ENCODE measurements at regions of chr12 and their contacts with region 1.

Region 1: DNA sequence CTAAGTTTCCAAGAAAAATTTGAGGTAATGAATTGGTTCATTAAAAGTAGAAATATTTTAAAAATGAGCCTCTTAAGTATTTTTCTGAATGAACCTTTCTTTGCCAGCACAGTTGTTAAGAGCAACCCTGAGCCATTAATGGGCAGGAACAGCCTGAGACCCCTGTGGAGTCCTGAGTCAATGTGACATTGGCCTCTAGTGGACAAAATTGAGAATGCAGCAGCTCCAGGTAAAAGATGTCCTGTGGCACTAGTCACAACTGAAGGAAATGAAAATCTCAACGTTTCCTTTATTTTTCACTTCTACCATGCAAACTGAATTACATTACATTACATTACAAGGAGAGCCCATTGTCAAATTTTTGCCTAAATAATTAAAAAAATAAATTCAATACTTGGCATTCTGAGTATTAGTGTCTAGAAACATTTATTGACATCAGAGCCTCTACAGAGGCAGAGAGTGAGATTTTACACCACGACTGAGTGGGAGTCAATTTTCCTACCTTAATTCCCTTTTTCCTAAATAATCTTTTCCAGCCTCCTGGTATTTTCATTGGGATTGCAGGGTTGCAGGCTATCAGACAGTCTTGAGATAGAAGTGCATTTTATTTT is 135.7 kb downstream of the PPM1H start:
- DNase-seq: peak; percentile 47 to 62
- H3K4me3 ChIP-seq: no peak overlapping the region
- H3K27ac ChIP-seq: no peak overlapping the region
- H3K4me1 ChIP-seq: no peaks in the 10 kb centered on the region
- H3K27me3 ChIP-seq: no peaks in the 10 kb centered on the region
- CTCF ChIP-seq: peak; percentile 84 to 89 (median 88)
- POLR2A ChIP-seq: no peak

Region 2: DNA sequence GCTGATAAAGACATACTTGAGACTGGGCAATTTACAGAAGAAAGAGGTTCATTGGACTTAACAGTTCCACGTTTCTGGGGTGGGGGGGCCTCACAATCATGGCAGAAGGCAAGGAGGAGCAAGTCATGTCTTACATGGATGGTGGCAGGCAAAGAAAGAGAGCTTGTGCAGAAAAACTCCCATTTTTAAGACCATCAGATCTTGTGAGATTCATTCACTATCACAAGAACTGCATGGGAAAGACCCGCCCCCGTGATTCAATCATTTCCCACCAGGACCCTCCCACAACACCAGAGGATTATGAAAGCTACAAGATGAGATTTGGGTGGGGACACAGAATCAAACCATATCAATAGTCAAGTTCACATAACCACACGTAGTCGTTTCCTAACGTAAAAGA is 453.6 kb before region 1 on chr12:
- intact Hi-C with region 1: no loop called
- DNase-seq: no peak
- H3K4me3 ChIP-seq: no peak overlapping the region
- H3K27ac ChIP-seq: no peak overlapping the region
- H3K4me1 ChIP-seq: no peaks in the 10 kb centered on the region
- H3K27me3 ChIP-seq: no peaks in the 10 kb centered on the region
- CTCF ChIP-seq: no peak
- POLR2A ChIP-seq: no peak

Region 3: DNA sequence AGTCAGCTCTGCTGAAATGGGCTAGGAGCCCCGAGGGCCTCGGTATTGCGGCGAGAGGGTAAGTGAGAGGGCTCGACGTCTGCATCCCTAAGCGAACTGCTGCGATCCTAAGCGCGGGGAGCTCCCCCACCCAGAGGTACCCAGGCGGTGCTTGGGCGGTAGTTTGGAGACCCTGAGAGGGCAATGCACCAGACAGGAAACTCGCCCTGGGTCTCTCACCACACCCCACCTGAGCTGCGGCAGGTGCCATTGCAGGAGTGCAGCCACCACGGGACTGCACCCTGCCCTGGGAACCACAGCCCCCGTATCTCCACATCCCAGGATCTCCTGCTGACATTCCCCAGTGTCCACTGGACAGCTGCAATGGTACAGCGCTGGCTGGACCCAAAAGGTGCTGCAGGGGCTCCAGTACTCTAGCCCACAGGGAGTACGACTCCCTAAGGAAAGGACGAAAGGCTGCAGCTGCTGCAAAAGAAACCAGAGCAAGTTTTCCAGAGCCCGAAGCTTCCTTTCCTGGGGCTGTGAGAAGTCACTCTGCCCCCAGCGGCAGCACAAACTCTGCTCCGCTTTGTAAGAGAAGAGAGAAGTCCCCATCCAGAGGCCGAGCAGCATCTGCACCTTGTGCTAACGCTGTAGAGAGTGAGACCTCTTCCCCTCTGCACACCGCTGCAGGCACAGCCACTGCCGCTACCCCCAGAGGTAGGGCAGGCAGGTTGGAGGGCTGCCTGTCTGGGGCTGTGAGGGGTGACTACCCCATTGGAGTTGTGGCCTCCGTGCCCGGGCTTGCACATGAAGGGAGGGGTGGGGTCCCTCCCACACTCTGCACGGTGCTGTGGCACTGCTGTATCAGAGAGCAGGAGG is 363.7 kb before region 1 on chr12:
- intact Hi-C with region 1: loop called (anchors 5 kb)
- DNase-seq: peak; percentile 25 to 33
- H3K4me3 ChIP-seq: peak overlapping the region; percentile 21 to 38
- H3K27ac ChIP-seq: no peak overlapping the region
- H3K4me1 ChIP-seq: no peaks in the 10 kb centered on the region
- H3K27me3 ChIP-seq: peaks cover 0 to 4% of the 10 kb centered on the region in 2 donors
- CTCF ChIP-seq: peak in 3 of 4 experiments; percentile 21 to 43 (median 31)
- POLR2A ChIP-seq: no peak

Region 4: GRCh38 chr12:62581288-62582064 is 217.8 kb before region 1 on chr12:
- intact Hi-C with region 1: loop called (anchors 5 kb)
- DNase-seq: no peak
- H3K4me3 ChIP-seq: no peak overlapping the region
- H3K27ac ChIP-seq: no peak overlapping the region
- H3K4me1 ChIP-seq: peaks cover 0 to 3% of the 10 kb centered on the region in 2 donors
- H3K27me3 ChIP-seq: no peaks in the 10 kb centered on the region
- CTCF ChIP-seq: peak; percentile 68 to 86 (median 75)
- POLR2A ChIP-seq: no peak

Region 5: GRCh38 chr12:62876938-62877548 is 77.8 kb after region 1 on chr12:
- intact Hi-C with region 1: no loop called
- DNase-seq: no peak
- H3K4me3 ChIP-seq: no peak overlapping the region
- H3K27ac ChIP-seq: no peak overlapping the region
- H3K4me1 ChIP-seq: no peaks in the 10 kb centered on the region
- H3K27me3 ChIP-seq: no peaks in the 10 kb centered on the region
- CTCF ChIP-seq: no peak
- POLR2A ChIP-seq: no peak

Measured in uterus (tissue), 4 donors.